CD4-positive, alpha-beta memory T cell (primary cell): ENCODE measurements at regions of chr1 and their contacts with region 1.

Region 1: DNA sequence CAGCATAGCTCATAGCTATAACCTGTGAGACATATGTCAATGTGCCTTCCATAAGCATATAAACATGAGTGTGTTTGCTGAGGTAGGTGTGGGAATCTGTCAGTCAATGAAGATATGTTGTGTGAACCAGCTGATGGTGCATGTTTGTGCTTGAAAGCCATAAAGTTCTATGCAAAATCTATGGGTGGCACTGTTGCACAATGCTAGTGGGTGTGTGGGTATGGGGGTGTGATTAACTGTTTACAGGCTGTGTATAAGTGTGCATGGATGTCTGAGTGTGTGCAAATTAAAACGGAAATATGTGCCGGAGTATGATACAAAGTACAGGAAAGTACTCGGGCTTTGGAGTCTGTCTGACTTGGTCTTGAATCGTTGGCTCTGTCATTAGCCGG is 1.0 kb upstream of the ATP2B4 start:
- DNase-seq: peak; percentile 84 to 91 (median 85)
- H3K4me3 ChIP-seq: peak overlapping the region; percentile 82 to 100
- H3K4me3 Mint-ChIP-seq: peak overlapping the region; percentile 95 to 100 (median 98)
- H3K27ac ChIP-seq: peak overlapping the region; percentile 84
- H3K27ac Mint-ChIP-seq: peak overlapping the region; percentile 83 to 97 (median 96)
- H3K4me1 ChIP-seq: peaks cover 32% of the 10 kb centered on the region
- H3K4me1 Mint-ChIP-seq: peaks cover 18 to 56% (median 24%) of the 10 kb centered on the region in 4 donors
- H3K27me3 ChIP-seq: no peaks in the 10 kb centered on the region
- H3K27me3 Mint-ChIP-seq: no peaks in the 10 kb centered on the region

Region 2: GRCh38 chr1:203267347-203267846 is 358.2 kb before region 1 on chr1:
- CTCF ChIA-PET with region 1: interaction called, 13 read pairs
- POLR2A ChIA-PET with region 1: no interaction called
- intact Hi-C with region 1: loop called (anchors 5 kb)
- DNase-seq: peak; percentile 83 to 88 (median 85)
- H3K4me3 ChIP-seq: peak overlapping the region; percentile 64 to 85
- H3K4me3 Mint-ChIP-seq: peak overlapping the region; percentile 84 to 92 (median 89)
- H3K27ac ChIP-seq: peak overlapping the region; percentile 75
- H3K27ac Mint-ChIP-seq: peak overlapping the region; percentile 79 to 96 (median 93)
- H3K4me1 ChIP-seq: peaks cover 32% of the 10 kb centered on the region
- H3K4me1 Mint-ChIP-seq: peaks cover 11 to 26% (median 22%) of the 10 kb centered on the region in 4 donors
- H3K27me3 ChIP-seq: no peaks in the 10 kb centered on the region
- H3K27me3 Mint-ChIP-seq: peaks cover 1 to 2% of the 10 kb centered on the region in 2 donors

Region 3: GRCh38 chr1:203593723-203594122 is 31.9 kb before region 1 on chr1:
- CTCF ChIA-PET with region 1: interaction called, 53 read pairs
- POLR2A ChIA-PET with region 1: interaction called, 20 read pairs
- intact Hi-C with region 1: loop called (anchors 1 kb)
- DNase-seq: peak; percentile 49 to 63 (median 55)
- H3K4me3 ChIP-seq: no peak overlapping the region
- H3K4me3 Mint-ChIP-seq: no peak overlapping the region
- H3K27ac ChIP-seq: no peak overlapping the region
- H3K27ac Mint-ChIP-seq: peak overlapping the region in 2 of 7 donors; percentile 1 to 33
- H3K4me1 ChIP-seq: peaks cover 3% of the 10 kb centered on the region
- H3K4me1 Mint-ChIP-seq: peaks cover 5 to 11% (median 7%) of the 10 kb centered on the region in 4 donors
- H3K27me3 ChIP-seq: no peaks in the 10 kb centered on the region
- H3K27me3 Mint-ChIP-seq: peaks cover 0 to 4% of the 10 kb centered on the region in 2 donors

Region 4: GRCh38 chr1:203649999-203650855 is 24.6 kb after region 1 on chr1:
- CTCF ChIA-PET with region 1: interaction called, 37 read pairs
- POLR2A ChIA-PET with region 1: interaction called, 240 read pairs
- intact Hi-C with region 1: loop called (anchors 1 kb)
- DNase-seq: peak; percentile 59 to 95 (median 67)
- H3K4me3 ChIP-seq: peak overlapping the region; percentile 13 to 54
- H3K4me3 Mint-ChIP-seq: peak overlapping the region; percentile 82 to 93 (median 88)
- H3K27ac ChIP-seq: peak overlapping the region; percentile 78
- H3K27ac Mint-ChIP-seq: peak overlapping the region; percentile 96 to 99 (median 98)
- H3K4me1 ChIP-seq: peaks cover 74% of the 10 kb centered on the region
- H3K4me1 Mint-ChIP-seq: peaks cover 50 to 81% (median 68%) of the 10 kb centered on the region in 4 donors
- H3K27me3 ChIP-seq: no peaks in the 10 kb centered on the region
- H3K27me3 Mint-ChIP-seq: no peaks in the 10 kb centered on the region

Region 5: GRCh38 chr1:203682473-203683383 is 57.1 kb after region 1 on chr1:
- CTCF ChIA-PET with region 1: interaction called, 46 read pairs
- POLR2A ChIA-PET with region 1: interaction called, 166 read pairs
- intact Hi-C with region 1: no loop called
- DNase-seq: peak; percentile 85 to 93 (median 90)
- H3K4me3 ChIP-seq: peak overlapping the region in 1 of 2 donors; percentile 12
- H3K4me3 Mint-ChIP-seq: peak overlapping the region; percentile 39 to 73 (median 63)
- H3K27ac ChIP-seq: peak overlapping the region; percentile 74
- H3K27ac Mint-ChIP-seq: peak overlapping the region; percentile 89 to 99 (median 98)
- H3K4me1 ChIP-seq: peaks cover 73% of the 10 kb centered on the region
- H3K4me1 Mint-ChIP-seq: peaks cover 47 to 77% (median 62%) of the 10 kb centered on the region in 4 donors
- H3K27me3 ChIP-seq: no peaks in the 10 kb centered on the region
- H3K27me3 Mint-ChIP-seq: no peaks in the 10 kb centered on the region

Region 6: GRCh38 chr1:203795441-203796235 is 170.0 kb after region 1 on chr1 and contains the starts of genes ZBED6 and ZC3H11A:
- CTCF ChIA-PET with region 1: no interaction called
- POLR2A ChIA-PET with region 1: no interaction called
- intact Hi-C with region 1: loop called (anchors 10 kb)
- DNase-seq: peak; percentile 96 to 100 (median 98)
- H3K4me3 ChIP-seq: peak within 1 kb of the TSS; percentile 72 to 74
- H3K4me3 Mint-ChIP-seq: peak within 1 kb of the TSS; percentile 91 to 99 (median 97)
- H3K27ac ChIP-seq: peak within 1 kb of the TSS; percentile 81
- H3K27ac Mint-ChIP-seq: peak within 1 kb of the TSS; percentile 86 to 99 (median 98)
- H3K4me1 ChIP-seq: peaks cover 51% of the 10 kb centered on the region
- H3K4me1 Mint-ChIP-seq: peaks cover 35 to 57% (median 48%) of the 10 kb centered on the region in 4 donors
- H3K27me3 ChIP-seq: no peaks in the 10 kb centered on the region
- H3K27me3 Mint-ChIP-seq: no peaks in the 10 kb centered on the region
- total RNA-seq, gene ZBED6: 26.5 to 29.3 TPM
- total RNA-seq, gene ZC3H11A: 132 to 141 TPM